Heart left ventricle (tissue), 16 donors: ENCODE measurements at regions of chr14 and their contacts with region 1.

Region 1: GRCh38 chr14:69242311-69243224 is 17.4 kb upstream of the GALNT16 start:
- DNase-seq: peak in 3 of 5 donors; percentile 56 to 62 (median 59)
- ATAC-seq: peak; percentile 53 to 71 (median 65)
- H3K4me3 ChIP-seq: no peak overlapping the region
- H3K27ac ChIP-seq: peak overlapping the region in 4 of 12 donors; percentile 8 to 25 (median 15)
- H3K4me1 ChIP-seq: peaks cover 0 to 32% (median 12%) of the 10 kb centered on the region in 12 donors
- H3K27me3 ChIP-seq: no peaks in the 10 kb centered on the region
- CTCF ChIP-seq: peak; percentile 68 to 86 (median 80)
- POLR2A ChIP-seq: no peak

Region 2: DNA sequence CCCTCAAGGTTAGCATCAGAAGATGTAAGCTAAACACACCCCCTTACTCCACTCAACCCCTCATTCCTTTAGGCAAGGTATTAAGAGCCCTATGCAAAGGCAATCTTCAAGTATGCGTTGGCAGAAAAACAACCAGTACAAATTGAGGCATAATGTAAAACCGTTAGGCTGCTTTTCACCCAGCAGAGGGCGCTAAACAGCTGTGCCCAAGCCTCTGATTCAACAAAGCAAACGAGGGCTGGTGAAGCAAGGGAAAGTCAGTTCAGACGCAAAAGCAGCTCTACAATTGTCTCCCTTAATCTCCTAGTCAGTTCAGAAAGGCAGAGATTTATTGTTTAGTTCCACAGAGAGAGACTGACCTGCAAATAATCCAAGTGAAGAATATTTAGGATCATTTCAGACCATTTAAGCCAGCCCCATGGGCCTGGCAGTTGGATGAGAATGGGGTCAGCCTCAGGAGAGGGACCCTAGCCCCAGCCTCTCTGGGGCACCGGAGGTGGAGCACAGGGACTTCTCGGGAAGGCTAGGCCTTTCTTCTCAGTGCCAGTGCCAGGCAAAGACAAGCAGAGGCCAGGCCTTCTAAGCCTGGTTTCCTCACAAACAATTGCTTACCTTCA is 113.2 kb before region 1 on chr14:
- intact Hi-C with region 1: loop called in 3 of 10 experiments (anchors 5 kb)
- DNase-seq: peak in 4 of 5 donors; percentile 68 to 78 (median 72)
- ATAC-seq: peak; percentile 70 to 84 (median 78)
- H3K4me3 ChIP-seq: no peak overlapping the region
- H3K27ac ChIP-seq: peak overlapping the region in 4 of 12 donors; percentile 6 to 64 (median 18)
- H3K4me1 ChIP-seq: peaks cover 2 to 82% (median 47%) of the 10 kb centered on the region in 12 donors
- H3K27me3 ChIP-seq: no peaks in the 10 kb centered on the region
- CTCF ChIP-seq: peak; percentile 85 to 96 (median 91)
- POLR2A ChIP-seq: no peak

Region 3: DNA sequence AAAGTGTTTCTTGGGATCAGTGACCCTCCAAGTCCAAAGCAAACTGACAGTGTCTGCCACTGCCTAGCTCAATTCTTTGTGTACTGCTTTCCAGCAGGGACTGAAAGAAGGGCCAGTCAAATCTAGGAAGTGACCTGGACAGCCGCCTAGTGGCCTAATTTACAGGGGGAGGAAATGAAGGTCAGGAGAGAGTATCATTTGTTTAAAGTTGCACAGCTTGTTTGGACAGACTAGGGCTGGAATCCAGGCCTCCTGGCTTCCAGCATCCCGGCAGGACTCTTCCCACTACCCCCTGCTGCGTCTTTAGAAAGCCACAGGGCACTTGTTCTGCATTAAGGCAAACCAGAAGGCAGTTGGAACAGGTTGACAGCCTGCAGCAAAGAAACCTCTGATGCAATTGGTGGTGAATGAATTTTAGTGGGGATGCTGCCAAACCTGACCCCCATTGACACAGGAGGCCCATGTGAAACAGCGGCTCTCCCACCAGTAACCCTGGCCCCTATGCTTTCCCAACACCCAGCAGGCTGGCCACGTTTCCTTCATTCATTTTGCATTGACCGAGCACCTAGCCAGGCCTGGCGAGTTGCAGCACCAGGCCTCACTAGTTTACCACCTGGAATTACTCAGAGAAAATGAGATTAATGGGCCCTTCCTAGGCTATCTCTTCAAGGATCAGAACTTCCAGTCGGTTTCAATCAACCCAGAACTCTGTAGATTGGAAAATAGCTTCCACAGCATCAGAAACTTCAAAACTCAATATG is 45.6 kb after region 1 on chr14:
- intact Hi-C with region 1: loop called in 1 of 10 experiments (anchors 2 kb)
- DNase-seq: peak; percentile 61 to 70 (median 63)
- ATAC-seq: peak; percentile 16 to 61 (median 48)
- H3K4me3 ChIP-seq: no peak overlapping the region
- H3K27ac ChIP-seq: peak overlapping the region in 11 of 12 donors; percentile 11 to 69 (median 38)
- H3K4me1 ChIP-seq: peaks cover 3 to 70% (median 54%) of the 10 kb centered on the region in 12 donors
- H3K27me3 ChIP-seq: no peaks in the 10 kb centered on the region
- CTCF ChIP-seq: peak; percentile 28 to 60 (median 45)
- POLR2A ChIP-seq: no peak

Region 4: DNA sequence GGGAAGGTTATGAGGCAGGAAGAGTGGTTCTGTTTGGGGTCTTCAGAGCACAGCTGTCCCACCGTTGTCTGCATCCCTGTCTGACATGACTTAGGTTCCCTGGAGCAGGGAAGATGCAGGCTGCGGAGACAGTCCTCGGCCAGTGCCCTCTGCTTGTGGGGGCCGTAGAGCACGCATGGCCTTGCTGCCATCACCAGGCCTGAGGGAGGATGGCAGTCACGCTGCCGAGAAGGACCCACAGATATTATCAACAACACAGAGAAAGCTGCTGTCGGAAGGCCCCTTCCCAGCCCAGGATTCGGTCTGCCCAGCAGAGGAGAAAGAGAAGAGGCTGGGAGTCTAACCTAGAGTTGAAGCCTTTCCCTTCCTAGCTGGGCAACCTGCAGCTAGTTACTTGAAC is 120.5 kb after region 1 on chr14:
- intact Hi-C with region 1: loop called in 9 of 10 experiments (anchors 1 to 5 kb)
- DNase-seq: peak in 4 of 5 donors; percentile 39 to 55 (median 48)
- ATAC-seq: peak; percentile 70 to 92 (median 88)
- H3K4me3 ChIP-seq: no peak overlapping the region
- H3K27ac ChIP-seq: no peak overlapping the region
- H3K4me1 ChIP-seq: no peaks in the 10 kb centered on the region
- H3K27me3 ChIP-seq: no peaks in the 10 kb centered on the region
- CTCF ChIP-seq: peak; percentile 31 to 70 (median 54)
- POLR2A ChIP-seq: no peak

Region 5: GRCh38 chr14:69460093-69460701 is 217.6 kb after region 1 on chr14:
- intact Hi-C with region 1: loop called (anchors 1 to 5 kb)
- DNase-seq: peak in 4 of 5 donors; percentile 44 to 61 (median 52)
- ATAC-seq: peak in 3 of 4 donors; percentile 83 to 92 (median 86)
- H3K4me3 ChIP-seq: no peak overlapping the region
- H3K27ac ChIP-seq: no peak overlapping the region
- H3K4me1 ChIP-seq: peaks cover 0 to 7% (median 0%) of the 10 kb centered on the region in 12 donors
- H3K27me3 ChIP-seq: no peaks in the 10 kb centered on the region
- CTCF ChIP-seq: peak; percentile 57 to 88 (median 75)
- POLR2A ChIP-seq: no peak